ENCODE measurements at regions of chr1 and their contacts with region 1.

Region 1: DNA sequence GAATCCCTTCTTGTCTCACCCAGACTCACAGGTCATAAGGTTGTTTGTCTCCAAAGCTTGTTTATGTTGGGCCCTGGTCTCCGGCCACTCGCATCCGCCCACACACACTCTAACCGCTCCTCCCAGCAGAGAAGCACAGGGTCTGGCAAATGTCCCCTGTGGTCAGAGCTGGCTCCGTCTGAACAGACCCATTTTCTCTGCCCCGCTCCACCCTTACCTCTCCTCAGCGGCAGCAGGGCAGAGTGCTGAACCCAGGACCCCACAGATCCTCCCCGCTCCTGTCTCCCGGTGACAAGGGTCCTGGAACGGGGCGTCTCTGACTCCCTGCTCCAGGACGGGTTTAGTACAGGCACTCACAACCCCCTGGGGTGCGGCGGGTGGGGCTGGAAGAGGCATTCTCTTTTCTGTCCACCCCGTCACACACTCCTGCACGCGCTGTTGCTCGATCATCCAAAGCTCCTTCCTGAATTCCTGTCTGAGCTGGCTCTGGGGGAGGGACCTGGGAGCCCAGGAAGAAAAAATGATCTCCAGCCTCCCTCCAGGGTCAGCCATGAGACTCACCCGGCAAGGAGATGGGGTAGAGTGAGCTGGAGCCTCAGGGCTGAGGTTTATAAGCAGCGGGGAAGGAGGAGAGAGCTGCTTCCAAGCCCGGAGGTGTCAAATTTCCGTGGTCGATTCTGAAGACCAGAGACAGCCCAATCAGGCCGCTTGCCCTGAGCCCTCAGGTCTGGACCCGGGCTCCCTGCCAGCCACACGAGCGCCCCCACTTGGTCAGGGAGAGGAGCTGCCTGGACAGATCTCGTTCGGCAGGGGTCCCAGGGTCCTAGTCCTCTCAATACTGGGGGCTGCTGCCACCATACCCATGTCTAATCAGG is at the start of gene S100A13:
- DNase-seq: peak; percentile 85 to 91
- ATAC-seq: peak; percentile 80 to 87
- H3K4me3 ChIP-seq: peak within 1 kb of the TSS; percentile 57
- H3K27ac ChIP-seq: peak within 1 kb of the TSS; percentile 92
- H3K4me1 ChIP-seq: peaks cover 18% of the 10 kb centered on the region
- CTCF ChIP-seq: peak; percentile 73
- EP300 ChIP-seq: no peak
- POLR2A ChIP-seq: peak; percentile 75
- RAD21 ChIP-seq: peak; percentile 54 to 72
- polyA plus RNA-seq, gene S100A13: 98.9 and 113 TPM in 2 replicates

Region 2: GRCh38 chr1:153520230-153520629 is 106.9 kb before region 1 on chr1:
- CTCF ChIA-PET with region 1: interaction called, 18 read pairs
- POLR2A ChIA-PET with region 1: interaction called, 4 read pairs
- DNase-seq: no peak
- ATAC-seq: no peak
- H3K4me3 ChIP-seq: no peak overlapping the region
- H3K27ac ChIP-seq: no peak overlapping the region
- H3K4me1 ChIP-seq: peaks cover 13% of the 10 kb centered on the region
- CTCF ChIP-seq: no peak
- EP300 ChIP-seq: no peak
- POLR2A ChIP-seq: no peak
- RAD21 ChIP-seq: no peak

Region 3: DNA sequence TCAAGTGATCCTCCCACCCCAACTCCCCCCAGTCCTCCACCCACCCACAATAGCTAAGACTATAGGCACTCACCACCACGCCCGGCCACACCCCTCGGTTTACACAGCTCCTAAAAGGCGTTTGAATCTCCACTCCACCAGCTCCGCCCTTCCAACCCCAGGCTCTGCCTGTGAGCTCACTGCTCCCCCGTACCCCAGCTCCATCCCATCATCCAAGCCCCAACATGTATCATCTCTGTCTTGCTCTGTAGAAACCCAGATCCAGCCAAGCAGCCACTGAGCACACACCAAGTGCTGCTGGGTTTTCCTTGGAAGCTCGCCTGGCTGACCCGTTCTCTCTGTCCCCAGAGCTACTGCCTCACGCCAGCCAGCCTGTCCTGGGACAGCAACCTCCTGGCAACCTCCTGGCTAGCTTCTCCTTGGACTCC is 49.5 kb before region 1 on chr1:
- CTCF ChIA-PET with region 1: interaction called, 253 read pairs
- POLR2A ChIA-PET with region 1: interaction called, 19 read pairs
- DNase-seq: no peak
- ATAC-seq: peak; percentile 31 to 66; a peak in 3 of 6 replicates
- H3K4me3 ChIP-seq: no peak overlapping the region
- H3K27ac ChIP-seq: peak overlapping the region in 1 of 2 experiments; percentile 69; a peak in 3 of 6 replicates
- H3K4me1 ChIP-seq: peaks cover 26% of the 10 kb centered on the region
- CTCF ChIP-seq: no peak
- EP300 ChIP-seq: no peak
- POLR2A ChIP-seq: no peak
- RAD21 ChIP-seq: no peak

Region 4: GRCh38 chr1:153608742-153609584 is 18.2 kb before region 1 on chr1:
- CTCF ChIA-PET with region 1: interaction called, 118 read pairs
- POLR2A ChIA-PET with region 1: interaction called, 39 read pairs
- DNase-seq: peak; percentile 88 to 98
- ATAC-seq: peak; percentile 73 to 82
- H3K4me3 ChIP-seq: peak overlapping the region; percentile 45
- H3K27ac ChIP-seq: peak overlapping the region; percentile 91 to 96
- H3K4me1 ChIP-seq: peaks cover 44% of the 10 kb centered on the region
- CTCF ChIP-seq: no peak
- EP300 ChIP-seq: no peak; a peak in 1 of 5 replicates
- POLR2A ChIP-seq: peak; percentile 46; the same call in 1 of the 2 replicates
- RAD21 ChIP-seq: no peak; a peak in 1 of 5 replicates

Region 5: DNA sequence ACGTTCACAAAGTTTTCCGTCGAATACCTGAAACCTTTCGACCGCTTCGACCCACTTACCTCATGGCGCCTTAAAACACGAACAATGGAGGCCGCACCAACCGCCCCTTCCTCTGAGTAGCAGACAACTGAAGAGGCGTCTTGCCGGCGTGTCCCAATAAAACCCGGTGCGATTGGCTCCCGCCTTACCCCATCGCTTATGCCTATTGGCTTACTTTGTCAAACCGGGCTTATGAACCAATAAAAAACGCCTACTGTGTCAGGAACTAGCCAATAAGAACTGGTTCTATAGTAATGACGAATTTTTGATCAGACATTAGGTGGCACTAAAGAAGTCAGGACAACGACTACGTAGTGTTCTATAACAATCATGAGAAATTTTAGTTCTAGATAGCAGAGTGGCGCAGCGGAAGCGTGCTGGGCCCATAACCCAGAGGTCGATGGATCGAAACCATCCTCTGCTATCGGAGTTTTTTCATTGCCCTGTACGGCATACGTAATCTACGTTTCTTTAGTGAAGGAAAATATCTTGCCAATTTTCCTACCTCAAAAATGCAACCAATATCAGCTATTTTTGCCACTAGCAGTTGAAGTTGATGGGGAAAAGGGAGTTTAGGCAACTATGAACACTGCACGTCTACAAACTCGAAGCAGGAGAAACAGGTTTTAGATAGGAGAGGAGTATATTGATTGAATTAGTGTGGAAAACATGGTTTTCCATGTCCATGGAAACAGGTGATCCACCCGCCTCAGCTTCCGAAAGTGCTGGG is 43.9 kb after region 1 on chr1 and contains the start of gene ILF2:
- CTCF ChIA-PET with region 1: interaction called, 10 read pairs
- POLR2A ChIA-PET with region 1: interaction called, 4 read pairs
- DNase-seq: peak; percentile 100
- ATAC-seq: peak; percentile 94 to 98
- H3K4me3 ChIP-seq: peak within 1 kb of the TSS; percentile 78
- H3K27ac ChIP-seq: peak within 1 kb of the TSS; percentile 82 to 90
- H3K4me1 ChIP-seq: peaks cover 10% of the 10 kb centered on the region
- CTCF ChIP-seq: peak; percentile 49
- EP300 ChIP-seq: no peak
- POLR2A ChIP-seq: peak; percentile 84
- RAD21 ChIP-seq: no peak
- polyA plus RNA-seq, gene ILF2: 285 and 339 TPM in 2 replicates

Region 6: GRCh38 chr1:153783233-153784190 is 156.4 kb after region 1 on chr1:
- CTCF ChIA-PET with region 1: no interaction called
- POLR2A ChIA-PET with region 1: no interaction called
- DNase-seq: peak; percentile 92 to 95
- ATAC-seq: peak; percentile 92 to 96
- H3K4me3 ChIP-seq: peak overlapping the region; percentile 53
- H3K27ac ChIP-seq: peak overlapping the region; percentile 86 to 95
- H3K4me1 ChIP-seq: peaks cover 4% of the 10 kb centered on the region; the same call in 2 of the 3 replicates
- CTCF ChIP-seq: no peak
- EP300 ChIP-seq: no peak
- POLR2A ChIP-seq: peak; percentile 87
- RAD21 ChIP-seq: no peak; a peak in 1 of 5 replicates

Measured in A549 (cell line).